CD4-positive, alpha-beta T cell (primary cell): ENCODE measurements at regions of chrX and their contacts with region 1.

Region 1: GRCh38 chrX:78493180-78493579 is 165.8 kb upstream of the CYSLTR1 start:
- DNase-seq: no peak
- ATAC-seq: no peak
- H3K4me3 ChIP-seq: no peak overlapping the region
- H3K4me3 Mint-ChIP-seq: no peak overlapping the region
- H3K27ac ChIP-seq: no peak overlapping the region
- H3K27ac Mint-ChIP-seq: no peak overlapping the region
- H3K4me1 ChIP-seq: no peaks in the 10 kb centered on the region
- H3K4me1 Mint-ChIP-seq: no peaks in the 10 kb centered on the region
- H3K27me3 ChIP-seq: no peaks in the 10 kb centered on the region
- H3K27me3 Mint-ChIP-seq: no peaks in the 10 kb centered on the region
- CTCF ChIP-seq: no peak

Region 2: DNA sequence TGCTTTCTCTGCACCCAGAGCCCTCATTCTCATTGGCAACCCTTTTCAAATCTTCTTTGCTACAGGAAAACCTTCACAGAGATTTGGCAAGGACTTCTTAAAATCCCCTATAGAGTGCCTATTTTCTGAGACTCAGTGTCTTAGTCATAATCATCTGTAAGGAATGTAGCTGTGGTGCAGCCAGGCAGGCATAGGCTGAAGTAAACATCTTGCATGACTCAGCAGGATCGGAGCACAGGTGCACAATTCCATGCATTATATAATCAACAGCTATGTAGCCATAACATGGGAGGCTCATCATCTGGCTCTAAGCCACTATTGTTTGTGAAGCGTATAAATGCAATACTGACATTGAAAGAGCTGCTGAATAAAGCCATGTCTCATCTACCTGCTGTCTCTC is 1696.9 kb before region 1 on chrX:
- CTCF ChIA-PET with region 1: no interaction called
- POLR2A ChIA-PET with region 1: no interaction called
- intact Hi-C with region 1: no loop called
- DNase-seq: no peak
- ATAC-seq: no peak
- H3K4me3 ChIP-seq: no peak overlapping the region
- H3K4me3 Mint-ChIP-seq: no peak overlapping the region
- H3K27ac ChIP-seq: no peak overlapping the region
- H3K27ac Mint-ChIP-seq: no peak overlapping the region
- H3K4me1 ChIP-seq: no peaks in the 10 kb centered on the region
- H3K4me1 Mint-ChIP-seq: no peaks in the 10 kb centered on the region
- H3K27me3 ChIP-seq: no peaks in the 10 kb centered on the region
- H3K27me3 Mint-ChIP-seq: no peaks in the 10 kb centered on the region
- CTCF ChIP-seq: no peak

Region 3: DNA sequence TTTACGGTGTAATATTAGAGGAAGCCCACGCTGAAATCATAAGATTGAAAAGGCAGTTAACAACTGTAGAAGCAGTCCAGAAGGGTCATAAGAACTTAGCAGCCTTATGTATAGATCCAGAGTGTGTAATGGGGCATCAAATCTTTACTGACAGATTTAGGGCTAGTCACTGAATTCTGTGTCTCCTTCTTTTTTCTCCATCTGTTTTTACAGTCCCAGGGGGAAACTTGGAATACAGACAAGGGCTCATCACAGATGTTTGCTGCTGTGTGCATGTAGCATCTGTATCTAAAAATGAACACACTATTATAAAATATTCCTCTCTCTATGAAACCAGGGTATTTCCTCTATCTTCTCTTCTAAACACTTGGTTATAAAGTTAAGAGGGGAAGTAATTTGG is 209.7 kb before region 1 on chrX:
- CTCF ChIA-PET with region 1: no interaction called
- POLR2A ChIA-PET with region 1: no interaction called
- intact Hi-C with region 1: loop called in 1 of 2 experiments (anchors 10 kb)
- DNase-seq: no peak
- ATAC-seq: no peak
- H3K4me3 ChIP-seq: no peak overlapping the region
- H3K4me3 Mint-ChIP-seq: no peak overlapping the region
- H3K27ac ChIP-seq: no peak overlapping the region
- H3K27ac Mint-ChIP-seq: no peak overlapping the region
- H3K4me1 ChIP-seq: no peaks in the 10 kb centered on the region
- H3K4me1 Mint-ChIP-seq: no peaks in the 10 kb centered on the region
- H3K27me3 ChIP-seq: no peaks in the 10 kb centered on the region
- H3K27me3 Mint-ChIP-seq: no peaks in the 10 kb centered on the region
- CTCF ChIP-seq: no peak

Region 4: GRCh38 chrX:78314571-78314970 is 178.6 kb before region 1 on chrX:
- CTCF ChIA-PET with region 1: no interaction called
- POLR2A ChIA-PET with region 1: no interaction called
- intact Hi-C with region 1: no loop called
- DNase-seq: peak in 1 of 14 experiments; percentile 9
- ATAC-seq: no peak
- H3K4me3 ChIP-seq: no peak overlapping the region
- H3K4me3 Mint-ChIP-seq: no peak overlapping the region
- H3K27ac ChIP-seq: no peak overlapping the region
- H3K27ac Mint-ChIP-seq: no peak overlapping the region
- H3K4me1 ChIP-seq: peaks cover 8% of the 10 kb centered on the region
- H3K4me1 Mint-ChIP-seq: peaks cover 46% of the 10 kb centered on the region
- H3K27me3 ChIP-seq: no peaks in the 10 kb centered on the region
- H3K27me3 Mint-ChIP-seq: no peaks in the 10 kb centered on the region
- CTCF ChIP-seq: no peak

Region 5: DNA sequence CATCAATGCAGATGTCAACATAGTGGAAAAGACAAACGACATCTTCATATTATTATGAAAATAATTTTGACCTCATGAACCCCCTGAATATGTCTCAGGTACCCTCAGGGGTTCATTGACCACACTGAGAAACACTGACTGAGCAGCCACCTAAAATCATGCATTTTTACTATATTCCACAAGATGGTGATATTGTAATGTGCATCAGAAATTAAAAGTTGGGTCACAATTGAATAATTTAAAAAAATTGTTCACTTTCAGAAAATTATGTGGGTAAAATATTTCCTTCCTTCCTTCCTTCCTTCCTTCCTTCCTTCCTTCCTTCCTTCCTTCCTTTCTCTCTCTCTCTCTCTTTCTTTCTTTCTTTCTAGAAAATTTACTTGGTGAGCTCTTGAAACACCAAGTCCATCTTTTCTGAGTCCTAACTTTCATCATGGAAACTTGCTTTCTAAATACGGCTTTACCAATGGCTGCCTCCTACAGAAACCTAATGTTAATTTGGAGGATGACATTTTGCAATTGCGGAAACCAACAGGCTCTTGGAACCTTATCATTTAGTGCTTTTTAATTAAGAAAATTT is 62.3 kb after region 1 on chrX:
- CTCF ChIA-PET with region 1: no interaction called
- POLR2A ChIA-PET with region 1: no interaction called
- intact Hi-C with region 1: no loop called
- DNase-seq: peak in 3 of 14 experiments; percentile 41 to 48 (median 45)
- ATAC-seq: peak; percentile 26
- H3K4me3 ChIP-seq: no peak overlapping the region
- H3K4me3 Mint-ChIP-seq: no peak overlapping the region
- H3K27ac ChIP-seq: no peak overlapping the region
- H3K27ac Mint-ChIP-seq: no peak overlapping the region
- H3K4me1 ChIP-seq: no peaks in the 10 kb centered on the region
- H3K4me1 Mint-ChIP-seq: peaks cover 9% of the 10 kb centered on the region
- H3K27me3 ChIP-seq: no peaks in the 10 kb centered on the region
- H3K27me3 Mint-ChIP-seq: no peaks in the 10 kb centered on the region
- CTCF ChIP-seq: peak; percentile 47